ENCODE measurements at regions of chr20 and their contacts with region 1.

Region 1: GRCh38 chr20:17536944-17537444 is 5.8 kb upstream of the BFSP1 start:
- DNase-seq: peak in 3 of 4 donors; percentile 65 to 82 (median 66)
- ATAC-seq: peak; percentile 96
- H3K4me3 ChIP-seq: no peak overlapping the region
- H3K27ac ChIP-seq: no peak overlapping the region
- H3K4me1 ChIP-seq: peaks cover 0 to 12% of the 10 kb centered on the region in 2 donors
- H3K27me3 ChIP-seq: peaks cover 0 to 3% of the 10 kb centered on the region in 2 donors
- CTCF ChIP-seq: peak; percentile 83 to 91

Region 2: DNA sequence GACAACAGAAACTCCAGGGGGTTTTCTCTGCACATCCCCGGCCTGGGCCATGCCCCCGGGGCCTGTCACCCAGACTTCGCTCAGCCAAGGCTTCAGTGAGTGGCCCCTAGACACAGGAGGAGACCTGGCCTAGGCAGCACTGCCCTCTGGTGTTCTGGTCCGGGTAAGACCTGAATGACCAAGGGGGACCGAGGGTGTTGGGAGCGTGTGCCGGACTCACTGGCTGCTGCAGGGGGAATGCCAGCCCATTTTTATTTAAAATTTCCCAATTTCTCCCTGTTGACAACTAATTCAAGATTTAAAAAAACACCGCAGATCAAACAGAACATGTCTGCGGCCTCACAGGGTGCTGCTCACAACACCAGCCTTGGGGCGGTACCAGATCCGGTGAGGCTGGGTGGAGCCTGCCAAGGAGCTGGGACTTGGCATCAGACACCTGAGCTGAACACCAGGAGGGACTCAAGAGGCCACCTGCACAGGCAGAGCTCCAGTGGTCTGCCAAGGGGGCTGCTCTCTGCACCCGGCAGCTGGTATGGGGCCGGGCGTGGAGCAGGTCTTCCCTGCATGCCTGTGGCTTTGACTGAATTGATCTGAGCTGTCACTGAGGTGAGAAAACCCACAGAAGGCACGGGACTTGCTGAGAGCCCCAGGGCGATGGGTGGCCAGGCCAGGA is 80.7 kb after region 1 on chr20:
- intact Hi-C with region 1: loop called in 1 of 2 experiments (anchors 10 kb)
- DNase-seq: peak in 3 of 4 donors; percentile 37 to 76 (median 65)
- ATAC-seq: peak; percentile 64
- H3K4me3 ChIP-seq: no peak overlapping the region
- H3K27ac ChIP-seq: no peak overlapping the region
- H3K4me1 ChIP-seq: peaks cover 3 to 25% of the 10 kb centered on the region in 2 donors
- H3K27me3 ChIP-seq: no peaks in the 10 kb centered on the region
- CTCF ChIP-seq: peak; percentile 35 to 63

Measured in left lung (tissue), 14 donors.